Activated naive CD4-positive, alpha-beta T cell treated with anti-CD3 and anti-CD28 coated beads for 36 hours (primary cell): ENCODE measurements at regions of chr5 and their contacts with region 1.

Region 1: GRCh38 chr5:76269932-76270610 is 133.0 kb upstream of the IQGAP2 start:
- DNase-seq: peak; percentile 65
- H3K4me3 Mint-ChIP-seq: peak overlapping the region; percentile 10
- H3K27ac Mint-ChIP-seq: peak overlapping the region; percentile 83
- H3K4me1 Mint-ChIP-seq: peaks cover 21% of the 10 kb centered on the region
- H3K27me3 Mint-ChIP-seq: no peaks in the 10 kb centered on the region

Region 2: GRCh38 chr5:76256116-76256889 is 13.8 kb before region 1 on chr5:
- CTCF ChIA-PET with region 1: interaction called, 6 read pairs
- intact Hi-C with region 1: loop called (anchors 1 kb)
- DNase-seq: peak; percentile 79
- H3K4me3 Mint-ChIP-seq: no peak overlapping the region
- H3K27ac Mint-ChIP-seq: no peak overlapping the region
- H3K4me1 Mint-ChIP-seq: peaks cover 2% of the 10 kb centered on the region
- H3K27me3 Mint-ChIP-seq: peaks cover 3% of the 10 kb centered on the region

Region 3: GRCh38 chr5:76367623-76368371 is 97.7 kb after region 1 on chr5:
- CTCF ChIA-PET with region 1: interaction called, 7 read pairs
- intact Hi-C with region 1: loop called (anchors 1 kb)
- DNase-seq: peak; percentile 65
- H3K4me3 Mint-ChIP-seq: no peak overlapping the region
- H3K27ac Mint-ChIP-seq: peak overlapping the region; percentile 88
- H3K4me1 Mint-ChIP-seq: peaks cover 27% of the 10 kb centered on the region
- H3K27me3 Mint-ChIP-seq: no peaks in the 10 kb centered on the region

Region 4: GRCh38 chr5:76521240-76521758 is 251.2 kb after region 1 on chr5:
- CTCF ChIA-PET with region 1: no interaction called
- intact Hi-C with region 1: loop called (anchors 1 kb)
- DNase-seq: no peak
- H3K4me3 Mint-ChIP-seq: no peak overlapping the region
- H3K27ac Mint-ChIP-seq: peak overlapping the region; percentile 83
- H3K4me1 Mint-ChIP-seq: peaks cover 71% of the 10 kb centered on the region
- H3K27me3 Mint-ChIP-seq: no peaks in the 10 kb centered on the region

Region 5: DNA sequence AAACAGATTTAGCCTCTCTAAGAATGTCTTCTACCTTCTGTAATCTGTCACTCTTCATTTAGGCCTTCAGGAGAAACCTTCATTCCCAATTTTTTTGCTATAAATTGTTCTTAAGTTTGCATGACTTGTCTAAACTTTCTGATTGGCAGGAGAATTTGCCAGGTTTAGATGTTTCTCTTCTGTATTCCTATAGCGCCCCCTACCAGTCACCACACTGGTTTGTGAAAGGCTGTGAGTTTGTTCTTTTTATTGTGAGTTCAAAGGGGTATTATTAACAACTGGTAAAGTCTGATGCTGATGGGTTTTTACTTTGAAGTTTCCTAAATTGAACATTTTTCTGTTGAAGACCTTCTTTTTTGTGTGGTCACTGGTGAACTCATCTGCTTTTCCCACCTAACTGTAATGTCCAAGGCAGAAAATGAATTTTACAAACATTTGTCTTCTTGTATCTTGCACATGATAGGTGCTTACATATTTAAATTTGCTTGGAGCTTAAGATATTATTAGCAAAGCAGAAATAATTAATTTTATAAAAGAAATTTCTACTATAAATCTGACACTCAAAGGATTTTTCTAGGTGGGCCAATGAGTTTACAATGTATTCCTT is 371.5 kb after region 1 on chr5:
- CTCF ChIA-PET with region 1: no interaction called
- intact Hi-C with region 1: loop called (anchors 1 kb)
- DNase-seq: peak; percentile 87
- H3K4me3 Mint-ChIP-seq: no peak overlapping the region
- H3K27ac Mint-ChIP-seq: no peak overlapping the region
- H3K4me1 Mint-ChIP-seq: peaks cover 4% of the 10 kb centered on the region
- H3K27me3 Mint-ChIP-seq: no peaks in the 10 kb centered on the region